GM12878 (cell line): ENCODE measurements at regions of chr10 and their contacts with region 1.

Region 1: DNA sequence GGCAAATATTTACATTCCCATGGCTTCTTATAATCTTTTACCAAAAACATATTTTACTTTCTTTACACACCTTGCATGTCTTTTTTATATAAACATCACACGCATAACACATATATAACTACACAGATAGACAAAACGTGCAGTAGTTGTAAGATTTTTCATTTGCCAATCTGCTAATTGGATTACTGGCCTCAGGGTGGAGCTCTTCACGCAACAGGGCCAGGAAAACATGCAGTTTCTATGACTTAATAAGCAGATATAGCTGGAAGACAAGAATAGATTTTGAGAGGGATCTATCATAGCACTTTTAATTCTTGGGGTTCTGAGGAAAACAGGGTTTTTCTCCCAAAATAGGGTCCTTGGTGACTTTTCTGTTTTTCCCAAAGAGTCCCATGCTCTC is 12.7 kb downstream of the ACADSB start:
- DNase-seq: no peak
- ATAC-seq: peak; percentile 51; the same call in 1 of the 3 replicates
- H3K4me3 ChIP-seq: no peak overlapping the region
- H3K27ac ChIP-seq: no peak overlapping the region
- H3K4me1 ChIP-seq: no peaks in the 10 kb centered on the region
- H3K27me3 ChIP-seq: no peaks in the 10 kb centered on the region
- CTCF ChIP-seq: peak; percentile 36 to 47 (median 40)
- EP300 ChIP-seq: no peak
- POLR2A ChIP-seq: no peak
- RAD21 ChIP-seq: peak; percentile 37

Region 2: DNA sequence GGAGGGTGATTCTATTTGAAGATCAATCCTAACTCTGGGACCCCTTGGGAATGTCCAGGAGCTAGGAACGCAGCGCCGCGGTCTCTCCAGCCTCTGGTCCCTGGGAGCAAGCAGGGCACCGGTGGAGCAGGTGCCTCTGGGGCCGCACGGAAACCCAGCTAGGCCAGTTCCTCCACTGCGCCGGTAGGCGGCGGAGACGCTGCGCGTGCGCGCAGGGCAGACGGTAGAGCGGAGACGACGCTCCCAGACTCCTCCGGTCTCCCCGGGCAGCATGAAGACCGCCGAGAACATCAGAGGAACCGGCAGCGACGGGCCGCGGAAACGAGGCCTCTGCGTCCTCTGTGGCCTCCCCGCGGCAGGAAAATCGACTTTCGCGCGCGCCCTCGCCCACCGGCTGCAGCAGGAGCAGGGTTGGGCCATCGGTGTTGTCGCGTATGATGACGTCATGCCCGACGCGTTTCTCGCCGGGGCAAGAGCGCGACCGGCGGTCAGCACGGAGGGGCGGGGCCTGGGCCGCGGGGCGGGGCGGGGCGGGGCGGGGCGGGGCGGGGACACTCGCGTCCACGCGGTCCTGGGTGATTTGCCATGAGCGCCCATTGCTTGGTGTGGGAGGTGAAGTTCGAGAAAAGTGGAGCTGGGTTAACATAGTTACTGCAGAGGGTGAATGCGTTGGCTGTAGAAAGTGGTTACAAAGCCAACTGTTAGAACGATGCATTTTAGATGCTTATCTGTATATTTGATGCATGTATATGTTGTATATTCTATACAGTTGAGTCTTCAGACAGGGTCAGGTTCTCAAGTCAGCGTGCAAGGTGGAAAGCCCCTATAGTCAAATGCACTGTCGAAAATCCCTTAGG is 41.1 kb before region 1 on chr10 and contains the start of gene PSTK:
- CTCF ChIA-PET with region 1: interaction called, 19 read pairs
- POLR2A ChIA-PET with region 1: no interaction called
- RAD21 ChIA-PET with region 1: interaction called, 4 read pairs
- SMC1A ChIA-PET with region 1: interaction called, 4 read pairs
- in situ Hi-C with region 1: no loop called
- intact Hi-C with region 1: no loop called
- DNase-seq: peak; percentile 66
- ATAC-seq: peak; percentile 98
- H3K4me3 ChIP-seq: peak within 1 kb of the TSS; percentile 69
- H3K27ac ChIP-seq: peak within 1 kb of the TSS; percentile 95
- H3K4me1 ChIP-seq: peaks cover 4% of the 10 kb centered on the region
- H3K27me3 ChIP-seq: no peaks in the 10 kb centered on the region; a peak in 1 of 4 replicates
- CTCF ChIP-seq: peak; percentile 93 to 98 (median 96)
- EP300 ChIP-seq: no peak
- POLR2A ChIP-seq: peak; percentile 97
- RAD21 ChIP-seq: peak; percentile 24; the same call in 1 of the 2 replicates
- polyA plus RNA-seq, gene PSTK: 1.8 to 3.3 TPM

Region 3: DNA sequence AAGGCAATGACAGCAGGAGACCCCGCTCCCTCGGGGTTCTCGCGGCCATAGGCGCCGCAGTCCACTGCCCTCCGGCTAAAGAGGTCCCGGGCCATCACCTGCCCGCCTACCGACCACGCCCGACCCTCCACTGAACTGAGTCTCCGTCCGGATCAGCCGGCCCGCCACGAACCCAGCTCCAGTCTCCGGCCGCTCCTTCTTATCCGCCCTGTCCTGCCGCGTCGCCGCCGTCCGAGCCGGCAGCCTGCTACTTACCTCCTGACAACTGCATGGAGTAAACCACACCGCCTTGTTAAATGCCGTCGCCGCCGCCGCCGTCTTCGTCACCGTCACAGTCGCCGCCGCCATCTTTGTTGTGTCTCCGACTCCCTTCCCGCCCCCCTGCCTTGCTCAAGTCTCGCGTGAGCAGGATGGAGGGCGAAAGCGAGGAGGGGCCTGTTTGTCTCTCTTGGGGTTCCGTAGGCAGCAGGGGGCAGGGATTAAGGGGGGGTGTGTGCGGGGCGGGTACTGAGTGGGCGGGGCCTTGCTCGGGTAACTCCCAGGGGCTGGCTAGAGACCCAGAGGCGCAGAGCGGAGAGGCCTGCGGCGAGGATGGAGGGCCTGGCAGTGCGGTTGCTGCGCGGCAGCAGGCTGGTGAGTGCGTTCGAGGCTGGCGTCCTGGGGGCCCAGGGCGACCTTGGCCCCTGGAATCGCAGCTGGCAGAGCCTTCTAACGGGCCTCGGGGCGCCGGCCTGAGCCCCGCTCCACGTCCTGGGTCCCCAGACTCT is 12.9 kb before region 1 on chr10 and contains the starts of genes ACADSB and IKZF5:
- CTCF ChIA-PET with region 1: interaction called, 23 read pairs
- POLR2A ChIA-PET with region 1: interaction called, 4 read pairs
- RAD21 ChIA-PET with region 1: interaction called, 3 read pairs
- SMC1A ChIA-PET with region 1: interaction called, 5 read pairs
- in situ Hi-C with region 1: no loop called
- intact Hi-C with region 1: no loop called
- DNase-seq: peak; percentile 92
- ATAC-seq: peak; percentile 95
- H3K4me3 ChIP-seq: peak within 1 kb of the TSS; percentile 99
- H3K27ac ChIP-seq: peak within 1 kb of the TSS; percentile 81
- H3K4me1 ChIP-seq: no peaks in the 10 kb centered on the region
- H3K27me3 ChIP-seq: no peaks in the 10 kb centered on the region
- CTCF ChIP-seq: no peak
- EP300 ChIP-seq: no peak
- POLR2A ChIP-seq: peak; percentile 99
- RAD21 ChIP-seq: no peak
- polyA plus RNA-seq, gene ACADSB: 10.9 to 11.3 TPM
- polyA plus RNA-seq, gene IKZF5: 6.8 to 11.2 TPM